ENCODE measurements at regions of chr10 and their contacts with region 1.

Region 1: DNA sequence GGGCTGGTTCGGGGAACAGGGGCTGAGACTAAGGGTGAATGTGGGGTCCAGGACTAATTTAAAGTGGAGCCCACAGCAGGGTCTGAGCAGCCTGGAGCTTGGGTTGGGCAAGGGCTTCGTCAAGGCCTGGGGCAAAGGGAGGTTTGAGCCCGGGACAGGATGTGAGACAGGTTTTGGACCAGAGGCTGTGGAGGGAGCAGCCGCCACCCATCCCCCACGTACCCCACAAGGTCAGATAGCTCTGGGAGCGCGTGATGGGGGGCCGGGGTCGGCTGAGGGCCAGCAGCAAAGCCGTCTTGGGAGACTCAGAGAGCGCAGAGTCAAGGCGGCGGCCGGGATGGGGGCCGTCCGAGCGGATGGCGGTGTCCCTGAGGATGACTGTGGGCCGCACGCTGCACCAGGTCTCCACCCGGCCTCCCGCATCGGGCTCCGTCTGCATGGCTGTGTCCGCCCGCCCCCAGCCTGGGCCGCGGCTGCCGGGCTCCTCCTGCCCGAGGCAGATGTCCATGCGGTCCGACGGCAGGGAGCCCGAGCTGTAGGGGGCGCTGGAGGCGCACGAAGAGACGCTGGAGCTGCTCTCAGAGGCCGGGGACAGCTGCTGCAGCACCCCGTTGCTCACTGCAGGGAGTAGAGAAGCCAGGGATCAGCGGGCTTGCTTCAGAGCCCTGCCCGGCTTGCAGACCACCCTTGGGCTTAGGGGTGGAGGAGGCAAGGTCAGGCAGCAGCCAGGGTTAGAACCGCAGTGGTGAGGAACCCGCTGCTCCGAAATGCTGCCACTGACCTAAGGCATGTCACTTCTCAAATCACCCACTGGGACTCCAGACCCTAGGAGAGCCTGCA is 12.1 kb downstream of the PDZD7 start:
- DNase-seq: peak; percentile 94
- H3K4me3 ChIP-seq: no peak overlapping the region; a peak in 1 of 4 replicates
- H3K27ac ChIP-seq: no peak overlapping the region
- H3K4me1 ChIP-seq: peaks cover 4 to 8% of the 10 kb centered on the region in 2 experiments; a peak in 3 of 4 replicates
- H3K27me3 ChIP-seq: no peaks in the 10 kb centered on the region
- CTCF ChIP-seq: peak; percentile 76
- EP300 ChIP-seq: no peak
- RAD21 ChIP-seq: peak; percentile 76

Region 2: GRCh38 chr10:101031128-101031795 is 12.4 kb after region 1 on chr10 and contains the starts of genes PDZD7 and SFXN3:
- CTCF ChIA-PET with region 1: interaction called, 198 read pairs
- POLR2A ChIA-PET with region 1: interaction called, 8 read pairs
- DNase-seq: peak; percentile 97
- H3K4me3 ChIP-seq: peak within 1 kb of the TSS; percentile 84 to 98
- H3K27ac ChIP-seq: peak within 1 kb of the TSS; percentile 98 to 99
- H3K4me1 ChIP-seq: peaks cover 7 to 43% of the 10 kb centered on the region in 2 experiments; a peak in 2 of 4 replicates
- H3K27me3 ChIP-seq: no peaks in the 10 kb centered on the region
- CTCF ChIP-seq: no peak
- EP300 ChIP-seq: no peak
- RAD21 ChIP-seq: no peak
- polyA plus RNA-seq, gene PDZD7: 1.9 and 2.3 TPM in 2 replicates
- polyA plus RNA-seq, gene SFXN3: 142 and 229 TPM in 2 replicates

Region 3: DNA sequence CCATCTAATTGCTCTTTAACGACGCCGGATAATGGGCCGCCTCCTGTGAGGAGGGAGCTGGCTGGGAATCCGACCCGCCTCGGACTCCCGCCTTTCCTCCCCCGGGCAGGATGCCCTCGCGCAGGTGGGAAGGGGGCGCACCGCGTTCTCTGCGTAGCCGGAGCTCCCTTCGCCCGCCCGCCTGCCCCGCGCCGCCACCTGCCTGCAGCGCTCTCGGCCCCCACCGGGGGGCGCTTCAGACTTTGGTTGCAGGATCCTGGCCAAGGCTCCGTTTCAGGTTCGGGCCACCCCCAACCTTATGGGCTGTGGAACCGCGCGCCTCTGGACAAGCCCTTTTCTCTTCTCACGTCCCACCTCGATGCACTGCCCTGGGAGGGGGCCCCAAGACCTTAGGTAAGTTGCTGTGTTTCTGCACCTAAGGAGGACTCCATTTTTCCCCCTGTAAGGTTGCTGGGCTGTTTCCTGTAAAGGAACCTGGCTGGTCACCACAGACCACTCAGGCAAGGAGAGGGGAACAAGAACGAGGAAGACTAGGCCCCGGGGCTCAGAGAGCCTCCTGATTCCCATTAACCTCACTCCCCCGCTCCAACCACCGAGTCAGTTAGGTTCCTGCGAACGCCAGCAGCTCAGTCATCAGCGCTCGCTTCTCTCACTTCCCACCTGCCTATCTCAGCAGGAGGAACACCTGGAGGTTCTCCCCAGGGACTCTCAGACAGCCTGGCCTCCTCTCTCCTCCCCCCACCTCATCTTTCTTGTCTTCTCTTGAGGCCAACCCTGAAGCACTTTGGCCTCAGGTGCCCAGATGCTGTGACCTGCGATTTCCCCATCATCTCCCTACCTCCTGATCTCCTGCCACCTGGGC is 31.6 kb after region 1 on chr10:
- CTCF ChIA-PET with region 1: interaction called, 70 read pairs
- POLR2A ChIA-PET with region 1: no interaction called
- DNase-seq: peak; percentile 87
- H3K4me3 ChIP-seq: peak overlapping the region; percentile 32 to 33; a peak in 3 of 4 replicates
- H3K27ac ChIP-seq: no peak overlapping the region
- H3K4me1 ChIP-seq: peaks cover 4 to 5% of the 10 kb centered on the region in 2 experiments; a peak in 1 of 4 replicates
- H3K27me3 ChIP-seq: no peaks in the 10 kb centered on the region
- CTCF ChIP-seq: peak; percentile 75
- EP300 ChIP-seq: no peak
- RAD21 ChIP-seq: peak; percentile 42

Region 4: GRCh38 chr10:101067356-101068083 is 48.7 kb after region 1 on chr10:
- CTCF ChIA-PET with region 1: interaction called, 60 read pairs
- POLR2A ChIA-PET with region 1: no interaction called
- DNase-seq: peak; percentile 87
- H3K4me3 ChIP-seq: peak overlapping the region; percentile 57 to 74
- H3K27ac ChIP-seq: peak overlapping the region in 1 of 2 experiments; percentile 70; a peak in 1 of 4 replicates
- H3K4me1 ChIP-seq: peaks cover under 1 to 19% of the 10 kb centered on the region in 2 experiments; a peak in 1 of 4 replicates
- H3K27me3 ChIP-seq: no peaks in the 10 kb centered on the region
- CTCF ChIP-seq: peak; percentile 84
- EP300 ChIP-seq: no peak
- RAD21 ChIP-seq: peak; percentile 86

Measured in SK-N-SH (cell line).